Ascending aorta (tissue), 2 donors: ENCODE measurements at regions of chr18 and their contacts with region 1.

Region 1: DNA sequence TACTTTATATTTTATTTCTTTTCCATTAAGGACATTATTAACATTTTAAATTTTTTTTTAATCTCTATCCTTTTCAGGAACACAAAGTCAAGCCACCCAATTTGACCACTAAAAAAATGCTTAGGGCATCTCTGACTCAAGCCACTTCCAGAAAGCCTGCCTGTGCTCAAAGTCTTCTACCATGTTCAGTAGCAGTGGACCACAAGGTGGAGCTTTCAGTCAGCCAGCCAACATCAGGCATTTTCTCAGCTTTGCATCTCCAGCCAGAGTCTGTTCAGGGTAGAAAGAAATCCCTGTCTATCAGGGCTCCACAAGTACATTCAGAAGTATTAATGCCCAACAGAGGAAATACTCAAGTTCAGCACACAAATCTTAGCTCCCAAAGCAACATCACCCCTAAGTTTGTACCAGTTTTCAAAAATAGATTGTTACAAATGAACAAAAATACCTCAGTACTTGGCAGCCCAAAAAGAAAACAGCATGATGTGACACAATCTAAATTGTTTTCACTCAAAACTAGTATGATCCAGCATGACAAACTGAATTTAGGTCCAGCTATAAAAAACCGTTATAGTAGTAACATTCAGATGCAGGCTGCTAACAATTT is 37.6 kb downstream of the C18orf63 start:
- DNase-seq: peak in 1 of 2 donors; percentile 85
- H3K4me3 ChIP-seq: no peak overlapping the region
- H3K27ac ChIP-seq: peak overlapping the region; percentile 8 to 35
- H3K4me1 ChIP-seq: peaks cover 0 to 3% of the 10 kb centered on the region in 2 donors
- H3K27me3 ChIP-seq: no peaks in the 10 kb centered on the region
- CTCF ChIP-seq: peak; percentile 59 to 77 (median 60)

Region 2: GRCh38 chr18:73153271-73153670 is 1200.0 kb before region 1 on chr18:
- intact Hi-C with region 1: no loop called
- DNase-seq: no peak
- H3K4me3 ChIP-seq: no peak overlapping the region
- H3K27ac ChIP-seq: no peak overlapping the region
- H3K4me1 ChIP-seq: no peaks in the 10 kb centered on the region
- H3K27me3 ChIP-seq: no peaks in the 10 kb centered on the region
- CTCF ChIP-seq: no peak

Region 3: GRCh38 chr18:74040459-74041332 is 312.6 kb before region 1 on chr18:
- intact Hi-C with region 1: no loop called
- DNase-seq: no peak
- H3K4me3 ChIP-seq: no peak overlapping the region
- H3K27ac ChIP-seq: no peak overlapping the region
- H3K4me1 ChIP-seq: no peaks in the 10 kb centered on the region
- H3K27me3 ChIP-seq: no peaks in the 10 kb centered on the region
- CTCF ChIP-seq: no peak

Region 4: GRCh38 chr18:74316259-74317170 is 36.8 kb before region 1 on chr18:
- intact Hi-C with region 1: no loop called
- DNase-seq: no peak
- H3K4me3 ChIP-seq: no peak overlapping the region
- H3K27ac ChIP-seq: no peak overlapping the region
- H3K4me1 ChIP-seq: no peaks in the 10 kb centered on the region
- H3K27me3 ChIP-seq: no peaks in the 10 kb centered on the region
- CTCF ChIP-seq: no peak

Region 5: GRCh38 chr18:74334242-74334893 is 18.9 kb before region 1 on chr18:
- intact Hi-C with region 1: no loop called
- DNase-seq: no peak
- H3K4me3 ChIP-seq: no peak overlapping the region
- H3K27ac ChIP-seq: no peak overlapping the region
- H3K4me1 ChIP-seq: no peaks in the 10 kb centered on the region
- H3K27me3 ChIP-seq: no peaks in the 10 kb centered on the region
- CTCF ChIP-seq: no peak

Region 6: DNA sequence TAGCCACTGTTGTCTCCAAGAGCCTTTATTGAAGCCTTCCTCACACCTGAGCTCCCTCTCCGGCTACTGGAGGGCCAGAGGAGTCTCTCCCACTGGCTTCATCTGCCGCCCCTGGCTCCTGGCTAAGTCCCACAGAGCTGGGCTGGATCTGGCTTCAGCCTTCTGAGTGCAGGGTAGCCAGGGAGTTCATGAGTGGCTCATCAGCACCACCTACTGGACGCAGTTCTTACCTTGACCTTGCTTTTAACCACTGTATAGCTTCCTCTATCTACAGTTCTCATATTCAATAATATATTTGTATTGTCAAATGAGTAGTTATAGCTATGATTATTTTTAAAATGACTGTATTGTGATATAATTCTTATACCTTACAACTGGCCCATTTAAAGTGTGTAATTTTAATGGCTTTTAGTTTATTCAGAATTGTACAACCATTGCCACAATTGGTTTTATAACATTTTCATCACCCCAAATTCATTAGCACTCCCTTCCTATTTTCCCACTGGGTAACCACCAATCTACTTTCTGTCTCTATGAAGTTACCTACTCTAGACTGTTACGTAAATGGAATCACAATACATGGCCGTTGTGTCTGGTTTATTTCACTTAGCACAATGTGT is 198.8 kb after region 1 on chr18:
- intact Hi-C with region 1: loop called (anchors 1 kb)
- DNase-seq: peak; percentile 31 to 89
- H3K4me3 ChIP-seq: no peak overlapping the region
- H3K27ac ChIP-seq: no peak overlapping the region
- H3K4me1 ChIP-seq: no peaks in the 10 kb centered on the region
- H3K27me3 ChIP-seq: no peaks in the 10 kb centered on the region
- CTCF ChIP-seq: peak; percentile 49 to 77 (median 72)